ENCODE measurements at regions of chr2 and their contacts with region 1.

Region 1: DNA sequence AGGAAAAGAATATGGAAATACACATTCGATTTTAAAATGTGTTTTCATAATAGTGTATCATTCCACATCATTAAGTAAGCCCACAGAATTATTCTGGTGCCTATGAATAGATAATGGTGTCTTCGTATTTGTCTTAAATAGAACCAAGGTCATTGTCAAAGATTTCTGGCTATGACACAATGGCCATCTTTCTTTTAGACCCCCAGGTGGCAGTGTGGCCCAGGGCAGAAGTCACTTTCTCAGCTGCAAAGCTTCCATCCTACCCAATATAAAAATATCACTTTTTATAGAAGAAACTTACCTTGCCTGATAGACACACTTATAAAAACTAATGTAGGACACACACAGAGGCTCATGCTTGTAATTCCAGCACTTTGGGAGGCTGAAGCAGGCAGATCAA is 57.5 kb downstream of the ZRANB3 start:
- DNase-seq: peak; percentile 25 to 65 (median 60)
- H3K4me3 ChIP-seq: no peak overlapping the region
- H3K27ac ChIP-seq: no peak overlapping the region
- H3K4me1 ChIP-seq: no peaks in the 10 kb centered on the region
- H3K27me3 ChIP-seq: no peaks in the 10 kb centered on the region

Region 2: DNA sequence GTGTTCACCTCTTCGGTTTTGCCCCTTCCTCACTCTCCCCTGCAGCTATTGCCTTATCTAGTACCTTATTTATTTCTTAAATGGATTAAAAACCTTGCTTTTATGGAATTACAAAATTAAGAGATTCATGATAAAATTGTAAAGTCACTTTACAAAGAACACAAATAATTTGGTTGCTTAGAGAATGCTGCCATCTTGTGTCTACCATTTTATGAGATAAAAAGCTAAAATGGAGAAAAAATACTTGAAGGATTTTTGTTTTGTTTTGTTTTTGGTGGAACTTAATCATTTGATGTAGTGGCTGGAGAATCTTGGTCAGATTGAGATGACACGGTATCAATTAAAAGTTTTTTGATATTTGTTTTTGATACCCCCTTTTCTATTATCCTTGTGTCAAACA is 127.3 kb after region 1 on chr2:
- CTCF ChIA-PET with region 1: interaction called, 13 read pairs
- POLR2A ChIA-PET with region 1: no interaction called
- DNase-seq: peak; percentile 20 to 48 (median 43)
- H3K4me3 ChIP-seq: no peak overlapping the region
- H3K27ac ChIP-seq: no peak overlapping the region
- H3K4me1 ChIP-seq: no peaks in the 10 kb centered on the region
- H3K27me3 ChIP-seq: no peaks in the 10 kb centered on the region

Region 3: DNA sequence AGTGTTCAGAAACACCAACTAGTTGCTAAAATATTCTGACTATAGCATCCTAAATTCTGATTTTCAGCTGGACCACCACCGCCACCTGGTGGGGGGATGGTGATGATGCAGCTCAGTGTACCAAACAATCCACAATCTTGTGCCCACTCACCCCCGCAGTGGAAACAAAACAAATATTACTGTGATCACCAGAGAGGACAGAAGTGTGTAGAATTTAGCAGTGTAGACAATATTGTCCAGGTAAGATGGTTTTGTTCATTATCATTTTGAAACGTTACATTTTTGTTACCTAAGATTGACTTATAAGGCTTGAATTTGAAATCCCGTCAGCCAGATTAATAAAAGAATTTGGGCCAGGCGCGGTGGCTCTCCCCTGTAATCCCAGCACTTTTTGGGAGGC is 236.4 kb after region 1 on chr2:
- CTCF ChIA-PET with region 1: interaction called, 10 read pairs
- POLR2A ChIA-PET with region 1: no interaction called
- DNase-seq: peak; percentile 34 to 78 (median 67)
- H3K4me3 ChIP-seq: no peak overlapping the region
- H3K27ac ChIP-seq: no peak overlapping the region
- H3K4me1 ChIP-seq: no peaks in the 10 kb centered on the region
- H3K27me3 ChIP-seq: no peaks in the 10 kb centered on the region